Heart left ventricle (tissue), 16 donors: ENCODE measurements at regions of chr16 and their contacts with region 1.

Region 1: DNA sequence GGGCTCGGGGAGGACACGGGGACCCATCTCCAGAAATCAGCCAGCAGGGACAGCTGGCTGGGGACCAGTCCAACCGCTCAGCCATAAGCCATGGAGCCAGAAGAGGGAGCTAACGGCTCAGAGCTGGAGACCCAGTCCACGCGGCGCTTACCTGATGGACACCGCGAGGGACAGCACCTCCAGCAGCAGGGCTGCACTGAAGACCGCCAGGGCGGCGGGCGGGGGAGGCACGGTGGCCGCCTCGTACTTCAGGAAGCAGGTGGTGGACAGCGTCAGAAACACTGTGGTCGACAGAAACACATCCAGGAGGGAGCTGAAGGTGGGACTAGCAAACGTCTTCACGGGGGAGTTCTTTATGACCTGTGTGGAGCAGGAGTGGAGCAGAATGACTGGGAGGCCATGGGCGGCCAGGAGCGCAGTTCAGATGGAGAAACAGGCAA is 102.6 kb upstream of the CREBBP start:
- DNase-seq: peak; percentile 65 to 74 (median 70)
- ATAC-seq: peak; percentile 67 to 89 (median 80)
- H3K4me3 ChIP-seq: no peak overlapping the region
- H3K27ac ChIP-seq: no peak overlapping the region
- H3K4me1 ChIP-seq: peaks cover 0 to 12% (median 4%) of the 10 kb centered on the region in 12 donors
- H3K27me3 ChIP-seq: no peaks in the 10 kb centered on the region
- CTCF ChIP-seq: peak; percentile 49 to 83 (median 69)
- POLR2A ChIP-seq: no peak

Region 2: GRCh38 chr16:3938848-3939624 is 44.1 kb before region 1 on chr16:
- intact Hi-C with region 1: loop called in 1 of 10 experiments (anchors 5 kb)
- DNase-seq: peak in 4 of 5 donors; percentile 47 to 88 (median 59)
- ATAC-seq: peak; percentile 57 to 89 (median 84)
- H3K4me3 ChIP-seq: peak overlapping the region; percentile 19 to 66 (median 53)
- H3K27ac ChIP-seq: peak overlapping the region in 2 of 12 donors; percentile 15 to 39
- H3K4me1 ChIP-seq: peaks cover 0 to 12% (median 6%) of the 10 kb centered on the region in 12 donors
- H3K27me3 ChIP-seq: no peaks in the 10 kb centered on the region
- CTCF ChIP-seq: peak; percentile 92 to 100 (median 97)
- POLR2A ChIP-seq: no peak

Region 3: GRCh38 chr16:4176612-4177417 is 193.7 kb after region 1 on chr16:
- intact Hi-C with region 1: loop called in 5 of 10 experiments (anchors 10 kb)
- DNase-seq: no peak
- ATAC-seq: no peak
- H3K4me3 ChIP-seq: no peak overlapping the region
- H3K27ac ChIP-seq: no peak overlapping the region
- H3K4me1 ChIP-seq: no peaks in the 10 kb centered on the region
- H3K27me3 ChIP-seq: peaks cover 0 to 4% (median 0%) of the 10 kb centered on the region in 9 donors
- CTCF ChIP-seq: no peak
- POLR2A ChIP-seq: no peak

Region 4: GRCh38 chr16:4183237-4184036 is 200.3 kb after region 1 on chr16:
- intact Hi-C with region 1: loop called in 5 of 10 experiments (anchors 10 kb)
- DNase-seq: peak; percentile 93 to 98 (median 94)
- ATAC-seq: peak; percentile 79 to 96 (median 96)
- H3K4me3 ChIP-seq: peak overlapping the region; percentile 43 to 90 (median 76)
- H3K27ac ChIP-seq: peak overlapping the region; percentile 89 to 99 (median 96)
- H3K4me1 ChIP-seq: peaks cover 0 to 17% (median 7%) of the 10 kb centered on the region in 12 donors
- H3K27me3 ChIP-seq: peaks cover 0 to 12% (median 0%) of the 10 kb centered on the region in 9 donors
- CTCF ChIP-seq: peak in 5 of 12 donors; percentile 14 to 51 (median 43)
- POLR2A ChIP-seq: peak in 1 of 2 donors; percentile 83

Region 5: GRCh38 chr16:4194661-4195060 is 211.6 kb after region 1 on chr16:
- intact Hi-C with region 1: loop called in 6 of 10 experiments (anchors 5 to 10 kb)
- DNase-seq: peak in 2 of 5 donors; percentile 11 to 13
- ATAC-seq: peak in 3 of 4 donors; percentile 5 to 35 (median 35)
- H3K4me3 ChIP-seq: no peak overlapping the region
- H3K27ac ChIP-seq: peak overlapping the region in 2 of 12 donors; percentile 29 to 32
- H3K4me1 ChIP-seq: peaks cover 0 to 21% (median 7%) of the 10 kb centered on the region in 12 donors
- H3K27me3 ChIP-seq: no peaks in the 10 kb centered on the region
- CTCF ChIP-seq: no peak
- POLR2A ChIP-seq: no peak

Region 6: DNA sequence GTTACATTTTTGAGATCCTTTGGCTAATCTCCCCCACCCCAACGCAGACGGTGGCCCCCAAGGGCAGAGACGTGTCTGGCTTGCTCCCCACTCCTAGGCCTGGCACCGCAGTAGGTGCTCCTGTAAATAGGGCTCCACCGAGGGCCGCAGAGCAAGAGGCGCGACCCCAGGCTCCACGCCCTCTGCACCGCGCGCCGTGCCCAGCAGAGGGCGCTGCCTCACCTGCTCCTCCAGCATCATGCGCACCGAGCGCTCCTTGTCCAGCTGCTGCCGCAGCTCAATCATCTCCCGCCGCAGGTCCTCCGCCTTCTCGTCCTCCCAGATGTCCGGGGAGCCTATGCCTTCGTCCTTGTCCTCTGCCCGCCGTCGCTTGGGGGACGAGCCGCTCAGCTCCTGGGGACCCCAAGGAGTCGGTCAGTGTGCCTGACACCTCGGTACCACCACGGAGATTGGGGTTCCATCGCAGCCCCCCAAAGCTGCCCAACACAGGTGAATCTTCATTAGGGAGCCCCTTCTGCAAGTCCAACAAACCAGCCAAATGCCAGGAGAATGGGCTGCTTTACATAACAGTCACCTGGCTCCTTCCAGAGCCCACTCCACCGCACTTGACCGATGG is 278.6 kb after region 1 on chr16:
- intact Hi-C with region 1: loop called in 4 of 10 experiments (anchors 5 to 10 kb)
- DNase-seq: peak in 1 of 5 donors; percentile 60
- ATAC-seq: no peak
- H3K4me3 ChIP-seq: no peak overlapping the region
- H3K27ac ChIP-seq: no peak overlapping the region
- H3K4me1 ChIP-seq: peaks cover 0 to 30% (median 11%) of the 10 kb centered on the region in 12 donors
- H3K27me3 ChIP-seq: no peaks in the 10 kb centered on the region
- CTCF ChIP-seq: peak; percentile 47 to 78 (median 58)
- POLR2A ChIP-seq: no peak

Region 7: DNA sequence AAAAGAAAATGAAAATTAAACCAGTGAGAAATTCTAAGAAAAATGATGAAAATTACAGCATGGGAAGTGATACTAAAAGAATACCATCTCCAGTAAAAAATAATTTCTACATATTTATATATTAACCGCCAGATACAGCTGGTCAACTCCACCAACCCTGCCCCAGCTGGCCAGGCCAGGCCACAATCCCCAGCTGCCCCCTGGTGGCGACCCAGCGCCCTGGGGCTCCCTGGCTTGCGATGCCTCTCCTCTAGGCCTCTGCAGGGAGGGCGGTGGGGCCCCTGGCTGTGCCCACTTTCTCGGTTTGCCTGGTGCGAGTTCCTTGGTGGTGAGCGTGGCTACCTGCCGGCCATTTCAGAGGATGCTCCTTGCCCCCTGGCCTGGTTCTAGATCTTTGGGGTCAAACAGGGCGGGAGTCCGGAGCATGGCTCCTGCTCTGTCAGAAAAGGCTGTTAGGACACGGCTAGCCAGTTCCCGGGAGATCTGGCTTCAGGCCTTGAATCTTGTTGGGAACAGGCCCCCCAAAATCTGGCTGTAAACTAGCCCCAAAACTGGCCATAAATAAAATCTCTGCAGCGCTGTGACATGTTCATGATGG is 347.3 kb after region 1 on chr16:
- intact Hi-C with region 1: loop called in 3 of 10 experiments (anchors 2 to 10 kb)
- DNase-seq: peak; percentile 84 to 93 (median 85)
- ATAC-seq: peak; percentile 52 to 66 (median 60)
- H3K4me3 ChIP-seq: no peak overlapping the region
- H3K27ac ChIP-seq: peak overlapping the region in 7 of 12 donors; percentile 80 to 98 (median 95)
- H3K4me1 ChIP-seq: peaks cover 6 to 54% (median 41%) of the 10 kb centered on the region in 12 donors
- H3K27me3 ChIP-seq: no peaks in the 10 kb centered on the region
- CTCF ChIP-seq: peak; percentile 95 to 100 (median 97)
- POLR2A ChIP-seq: no peak